Mammary epithelial cell (primary cell): ENCODE measurements at regions of chr2 and their contacts with region 1.

Region 1: DNA sequence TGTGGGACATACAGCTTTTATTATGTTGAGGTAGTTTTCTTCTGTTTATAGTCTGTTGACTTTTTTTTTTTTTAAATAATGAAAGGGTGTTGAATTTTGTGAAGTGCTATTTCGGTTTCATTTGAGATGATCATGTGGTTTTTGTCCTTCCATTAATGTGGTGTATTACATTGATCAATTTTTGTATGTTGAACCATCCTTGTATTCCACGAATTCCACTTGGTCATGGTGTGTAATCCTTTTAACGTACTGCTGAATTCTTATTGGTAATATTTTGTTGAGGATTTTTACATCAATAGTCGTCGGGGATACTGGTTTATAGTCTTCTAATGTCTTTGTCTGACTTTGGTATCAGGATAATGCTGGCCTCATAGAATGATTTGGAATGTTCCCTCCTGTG is 18.8 kb downstream of the ALMS1 start:
- DNase-seq: no peak
- H3K4me3 ChIP-seq: no peak overlapping the region
- H3K27ac ChIP-seq: no peak overlapping the region
- H3K4me1 ChIP-seq: no peaks in the 10 kb centered on the region
- H3K27me3 ChIP-seq: no peaks in the 10 kb centered on the region
- CTCF ChIP-seq: no peak

Region 2: DNA sequence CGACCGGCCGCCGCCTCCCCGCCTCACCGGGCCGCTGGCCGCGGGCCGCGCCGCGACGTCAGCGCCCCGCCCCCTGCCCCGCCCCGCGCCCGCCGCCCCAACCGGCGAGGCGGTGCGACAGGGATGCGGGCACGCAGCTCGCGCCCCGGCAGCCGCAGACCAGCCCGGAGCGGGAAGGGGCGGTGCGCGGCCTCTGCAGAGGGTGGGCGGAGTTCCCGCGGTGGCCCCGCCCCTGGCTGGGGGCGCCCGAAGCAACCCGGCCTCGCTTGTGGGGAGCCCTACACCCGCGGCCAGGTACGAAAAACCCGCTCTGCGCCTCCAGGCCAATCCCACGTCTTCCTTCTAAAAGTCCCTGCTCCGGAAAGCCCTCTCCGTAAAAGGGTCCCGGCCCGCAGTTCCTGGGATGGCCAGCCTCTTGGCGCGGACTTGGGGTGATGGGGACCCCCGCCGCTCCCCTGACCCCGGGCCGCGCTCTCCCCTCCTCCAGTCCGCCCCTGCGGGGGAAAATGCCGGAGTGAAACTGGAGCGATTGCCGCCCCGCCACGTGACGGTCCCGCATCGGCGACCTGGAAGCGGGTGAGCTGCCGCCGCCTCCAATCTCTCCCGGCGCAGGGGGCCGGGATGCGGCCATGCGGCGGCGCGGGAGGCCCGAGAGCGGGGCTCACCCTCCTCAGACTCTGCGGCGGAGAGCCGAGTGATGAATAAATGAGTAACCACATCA is 291.3 kb before region 1 on chr2 and contains the start of gene RAB11FIP5:
- CTCF ChIA-PET with region 1: no interaction called
- dilution Hi-C with region 1: no loop called
- in situ Hi-C with region 1: no loop called
- intact Hi-C with region 1: no loop called
- DNase-seq: peak; percentile 86
- H3K4me3 ChIP-seq: peak within 1 kb of the TSS; percentile 79 to 89 (median 86)
- H3K27ac ChIP-seq: peak within 1 kb of the TSS; percentile 92
- H3K4me1 ChIP-seq: peaks cover 16% of the 10 kb centered on the region
- H3K27me3 ChIP-seq: no peaks in the 10 kb centered on the region
- CTCF ChIP-seq: no peak
- total RNA-seq, gene RAB11FIP5: 36.0 to 39.7 TPM

Region 3: GRCh38 chr2:73451263-73451972 is 47.0 kb after region 1 on chr2:
- CTCF ChIA-PET with region 1: no interaction called
- dilution Hi-C with region 1: loop called (anchors 5 kb)
- in situ Hi-C with region 1: no loop called
- intact Hi-C with region 1: no loop called
- DNase-seq: no peak
- H3K4me3 ChIP-seq: no peak overlapping the region
- H3K27ac ChIP-seq: no peak overlapping the region
- H3K4me1 ChIP-seq: no peaks in the 10 kb centered on the region
- H3K27me3 ChIP-seq: no peaks in the 10 kb centered on the region
- CTCF ChIP-seq: no peak